Ovary (tissue), 10 donors: ENCODE measurements at regions of chr10 and their contacts with region 1.

Region 1: DNA sequence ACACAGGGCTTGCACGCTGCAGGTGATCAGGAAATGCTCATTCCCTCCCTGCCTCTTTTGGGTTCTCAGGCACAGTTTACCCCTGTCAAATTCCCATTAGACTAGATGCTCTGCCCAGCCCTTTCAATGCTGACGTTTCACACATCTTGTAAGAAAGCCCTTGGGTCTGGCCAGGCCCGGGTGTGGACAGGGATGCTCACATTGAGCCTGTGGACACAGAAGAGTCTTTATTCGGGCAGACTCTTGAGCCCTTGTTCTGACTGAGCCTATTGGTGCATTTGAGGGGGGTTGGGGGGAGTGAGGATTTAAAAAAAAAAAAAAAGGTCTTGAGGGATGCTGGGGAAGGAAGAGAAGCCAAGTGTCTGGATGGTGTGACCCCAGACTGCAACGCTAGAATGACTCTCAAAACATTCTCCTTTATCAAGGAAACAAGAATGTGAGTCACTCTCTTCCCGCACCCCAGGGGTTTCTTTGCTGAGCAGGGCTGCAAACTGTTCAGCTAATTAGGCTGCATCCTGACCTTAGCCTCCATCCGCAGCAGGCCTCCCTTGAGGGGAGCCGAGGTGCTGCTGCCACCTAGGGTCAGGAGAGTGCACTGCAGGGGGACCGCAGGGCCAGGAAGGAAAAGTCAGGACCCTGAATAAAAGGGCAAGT is 53.6 kb upstream of the TMEM72 start:
- DNase-seq: peak; percentile 62 to 86 (median 84)
- H3K4me3 ChIP-seq: no peak overlapping the region
- H3K27ac ChIP-seq: peak overlapping the region in 1 of 2 donors; percentile 16
- H3K4me1 ChIP-seq: peaks cover 2% of the 10 kb centered on the region
- H3K27me3 ChIP-seq: no peaks in the 10 kb centered on the region
- CTCF ChIP-seq: peak; percentile 89 to 98 (median 91)
- EP300 ChIP-seq: no peak
- POLR2A ChIP-seq: no peak

Region 2: GRCh38 chr10:44398747-44399658 is 458.5 kb before region 1 on chr10:
- intact Hi-C with region 1: loop called in 3 of 4 experiments (anchors 5 to 10 kb)
- DNase-seq: no peak
- H3K4me3 ChIP-seq: no peak overlapping the region
- H3K27ac ChIP-seq: no peak overlapping the region
- H3K4me1 ChIP-seq: no peaks in the 10 kb centered on the region
- H3K27me3 ChIP-seq: no peaks in the 10 kb centered on the region
- CTCF ChIP-seq: no peak
- EP300 ChIP-seq: no peak
- POLR2A ChIP-seq: no peak

Region 3: GRCh38 chr10:46299536-46300369 is 1442.3 kb after region 1 on chr10:
- intact Hi-C with region 1: no loop called
- DNase-seq: no peak
- H3K4me3 ChIP-seq: no peak overlapping the region
- H3K27ac ChIP-seq: no peak overlapping the region
- H3K4me1 ChIP-seq: no peaks in the 10 kb centered on the region
- H3K27me3 ChIP-seq: no peaks in the 10 kb centered on the region
- CTCF ChIP-seq: no peak
- EP300 ChIP-seq: no peak
- POLR2A ChIP-seq: no peak